ENCODE measurements at regions of chr11 and their contacts with region 1.

Region 1: DNA sequence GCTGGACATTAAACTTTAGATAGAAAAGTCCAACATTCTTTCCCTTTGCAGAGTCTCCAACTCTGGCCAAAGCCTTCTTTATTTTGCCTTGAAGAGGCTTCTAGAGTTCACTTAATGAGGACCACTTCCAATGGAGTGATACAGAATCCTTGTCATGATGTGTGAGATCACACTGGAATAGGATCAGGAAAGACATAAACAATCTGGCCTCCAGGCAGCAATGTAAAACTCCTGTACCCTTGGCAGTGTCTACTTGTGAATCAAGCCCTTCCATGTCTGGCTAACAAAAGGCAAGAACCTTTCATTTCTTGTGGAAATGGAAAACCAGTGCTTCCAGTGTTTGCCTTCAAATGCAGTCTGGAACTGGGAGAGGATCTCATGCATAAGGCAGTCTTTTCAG is 56.5 kb upstream of the FIBIN start:
- DNase-seq: no peak

Region 2: DNA sequence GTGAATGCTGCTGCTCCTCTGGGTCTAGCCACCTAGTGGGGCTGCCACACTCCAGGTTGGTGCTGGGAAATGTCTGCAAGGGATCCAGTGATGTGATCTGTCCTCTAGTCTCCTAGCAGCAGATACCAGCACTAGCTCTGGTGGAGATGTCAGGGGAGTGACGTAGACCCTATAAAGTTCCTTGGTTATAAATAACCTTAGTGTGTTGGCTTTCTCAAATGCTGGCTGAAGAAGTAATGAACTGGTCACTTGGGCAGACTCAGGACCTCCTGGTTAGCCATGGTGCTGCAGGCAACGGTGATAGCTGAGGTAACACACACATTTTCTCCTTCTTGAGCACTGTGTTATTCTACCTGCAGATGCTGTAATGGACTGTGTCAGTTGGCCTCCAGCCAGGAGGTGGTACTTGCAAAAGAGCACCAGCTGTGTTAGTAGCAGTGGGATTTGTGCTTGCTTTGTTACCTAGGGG is 138.8 kb after region 1 on chr11:
- CTCF ChIA-PET with region 1: no interaction called
- POLR2A ChIA-PET with region 1: no interaction called
- DNase-seq: no peak

Region 3: GRCh38 chr11:27496461-27496860 is 559.1 kb after region 1 on chr11:
- CTCF ChIA-PET with region 1: interaction called, 12 read pairs
- POLR2A ChIA-PET with region 1: no interaction called
- DNase-seq: no peak

Measured in HEK293T (cell line).